Mammary epithelial cell (primary cell): ENCODE measurements at regions of chr1 and their contacts with region 1.

Region 1: GRCh38 chr1:24830680-24831272 is 85.5 kb downstream of the CLIC4 start:
- DNase-seq: peak; percentile 55
- H3K4me3 ChIP-seq: no peak overlapping the region
- H3K27ac ChIP-seq: no peak overlapping the region
- H3K4me1 ChIP-seq: peaks cover 3% of the 10 kb centered on the region
- H3K27me3 ChIP-seq: no peaks in the 10 kb centered on the region
- CTCF ChIP-seq: peak; percentile 72 to 83

Region 2: DNA sequence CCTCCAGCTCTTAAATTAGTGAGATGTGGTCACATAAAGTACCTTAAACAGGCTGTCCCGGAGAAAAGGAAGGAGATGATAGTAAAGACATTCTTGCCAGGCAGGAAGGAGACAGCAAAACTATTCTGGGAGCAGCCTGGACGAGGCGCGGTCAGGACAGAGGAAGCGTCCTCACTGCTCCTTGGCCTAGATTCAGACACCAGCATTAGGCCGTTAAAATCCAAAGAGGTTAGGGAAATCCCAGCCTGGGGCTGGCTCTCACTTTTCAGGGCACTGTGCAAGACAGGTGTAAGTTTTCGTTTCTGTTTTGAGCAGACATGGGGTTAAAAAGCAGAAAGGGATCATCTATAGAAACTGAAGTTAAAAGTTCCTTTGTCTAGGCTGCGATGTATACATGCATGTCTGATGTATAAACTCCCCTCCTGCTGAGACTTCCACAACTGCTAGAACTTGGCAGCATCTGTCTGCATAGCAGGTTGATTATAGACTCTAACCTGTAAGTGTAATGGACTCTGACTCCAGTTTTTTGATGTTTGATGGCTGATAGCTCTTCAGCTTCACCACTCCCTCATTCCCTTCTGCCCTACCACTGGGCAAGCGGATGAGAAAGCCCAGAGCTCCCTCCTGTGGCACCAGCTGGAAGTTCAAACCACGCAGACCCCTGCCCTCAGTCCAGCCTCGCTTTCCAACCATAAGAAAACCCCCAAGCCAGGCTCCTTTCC is 438.7 kb before region 1 on chr1:
- CTCF ChIA-PET with region 1: no interaction called
- dilution Hi-C with region 1: no loop called
- in situ Hi-C with region 1: no loop called
- intact Hi-C with region 1: loop called (anchors 5 kb)
- DNase-seq: peak; percentile 50
- H3K4me3 ChIP-seq: peak overlapping the region in 2 of 3 experiments; percentile 14 to 24
- H3K27ac ChIP-seq: peak overlapping the region; percentile 76
- H3K4me1 ChIP-seq: peaks cover 28% of the 10 kb centered on the region
- H3K27me3 ChIP-seq: no peaks in the 10 kb centered on the region
- CTCF ChIP-seq: peak; percentile 87 to 90

Region 3: DNA sequence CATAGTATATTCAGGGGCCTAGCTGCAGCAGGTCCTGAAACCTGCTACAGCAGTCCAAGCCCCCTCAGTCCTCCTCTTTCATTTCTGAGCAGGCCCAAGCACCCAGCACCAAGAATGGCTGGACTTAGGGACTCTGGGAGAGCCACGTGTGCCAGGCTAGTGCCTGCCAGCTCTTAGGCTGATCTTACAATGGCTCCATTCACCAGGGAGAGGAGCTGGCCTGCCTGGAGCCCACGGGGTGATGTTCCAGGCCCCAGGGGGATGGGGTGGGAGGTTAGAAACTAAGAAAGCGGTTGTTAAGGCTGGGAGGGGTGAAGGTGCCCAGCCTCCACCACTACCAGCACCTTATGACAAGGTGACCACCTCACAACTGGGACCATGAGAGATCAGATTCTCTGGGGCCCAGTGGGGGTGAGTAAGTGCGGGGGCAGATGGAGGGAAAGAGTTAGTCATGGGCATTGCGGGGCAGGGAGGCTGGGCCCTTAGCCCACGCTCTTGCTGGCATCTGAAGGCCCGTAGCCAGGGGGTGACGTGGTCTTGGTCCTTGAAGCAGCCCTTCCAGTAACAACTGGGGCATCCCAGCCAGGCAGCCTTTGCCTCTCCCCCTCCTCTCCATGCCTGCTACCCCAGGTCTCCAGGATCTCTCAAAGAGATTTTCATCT is 115.8 kb before region 1 on chr1:
- CTCF ChIA-PET with region 1: no interaction called
- dilution Hi-C with region 1: no loop called
- in situ Hi-C with region 1: no loop called
- intact Hi-C with region 1: no loop called
- DNase-seq: peak; percentile 85
- H3K4me3 ChIP-seq: no peak overlapping the region
- H3K27ac ChIP-seq: peak overlapping the region; percentile 62
- H3K4me1 ChIP-seq: peaks cover 42% of the 10 kb centered on the region
- H3K27me3 ChIP-seq: no peaks in the 10 kb centered on the region
- CTCF ChIP-seq: no peak

Region 4: DNA sequence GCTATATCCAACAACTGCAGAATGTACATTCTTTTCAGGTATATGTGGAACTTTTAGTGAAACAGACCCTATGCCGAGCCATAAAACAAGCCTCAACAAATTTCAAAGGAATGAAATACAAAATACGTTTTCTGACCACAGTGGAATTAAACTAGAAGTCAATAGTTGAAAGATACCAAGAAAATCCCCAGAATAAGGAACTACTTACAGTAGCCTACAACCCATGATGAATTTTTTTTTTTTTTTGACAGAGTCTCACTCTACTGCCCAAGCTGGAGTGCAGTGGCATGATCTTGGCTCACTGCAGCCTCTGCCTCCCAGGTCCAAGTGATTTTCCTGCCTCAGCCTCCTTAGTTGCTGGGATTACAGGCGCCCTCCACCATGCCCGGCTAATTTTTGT is 15.9 kb after region 1 on chr1:
- CTCF ChIA-PET with region 1: no interaction called
- dilution Hi-C with region 1: no loop called
- in situ Hi-C with region 1: no loop called
- intact Hi-C with region 1: no loop called
- DNase-seq: no peak
- H3K4me3 ChIP-seq: no peak overlapping the region
- H3K27ac ChIP-seq: no peak overlapping the region
- H3K4me1 ChIP-seq: peaks cover 11% of the 10 kb centered on the region
- H3K27me3 ChIP-seq: no peaks in the 10 kb centered on the region
- CTCF ChIP-seq: no peak